CD8-positive, alpha-beta T cell (primary cell): ENCODE measurements at regions of chr1 and their contacts with region 1.

Region 1: DNA sequence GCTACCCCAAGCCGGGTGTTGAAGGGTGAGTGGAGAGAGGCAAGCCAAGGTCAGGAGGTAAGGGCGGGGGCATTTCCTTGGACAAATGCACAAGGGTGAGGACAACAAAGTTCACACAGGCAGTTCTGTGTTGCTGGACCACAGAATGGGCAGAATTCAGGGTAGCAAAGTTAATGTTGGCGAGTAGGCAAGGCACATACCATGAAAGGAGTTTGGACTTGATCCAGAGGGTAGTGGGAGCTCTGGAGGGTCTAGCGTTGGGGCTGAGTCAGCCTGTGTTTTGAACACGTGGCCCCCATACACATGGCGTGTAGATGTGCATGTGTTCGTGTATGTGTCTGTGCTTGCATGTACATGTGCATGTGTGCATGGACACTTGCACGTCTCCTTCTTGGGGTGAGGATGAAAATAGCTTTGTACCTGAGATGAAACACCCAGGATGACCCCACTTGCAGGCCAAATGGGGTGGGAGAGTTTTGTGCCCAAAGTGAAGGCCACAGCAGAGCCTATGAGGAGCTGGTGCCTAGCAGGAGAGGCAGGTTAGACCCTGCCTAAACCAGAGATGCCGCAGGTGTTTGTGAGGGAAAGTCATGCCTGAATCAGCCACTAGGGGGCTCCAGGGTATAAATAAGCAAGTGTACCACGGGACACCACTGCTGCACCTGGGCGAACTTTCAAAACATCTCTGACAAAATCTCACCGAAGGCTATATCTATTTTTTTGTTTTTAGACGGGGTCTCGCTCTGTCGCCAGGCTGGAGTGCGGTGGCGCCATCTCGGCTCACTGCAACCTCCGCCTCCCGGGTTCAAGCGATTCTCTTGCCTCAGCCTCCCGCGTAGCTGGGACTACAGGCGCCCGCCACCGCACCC is 21.8 kb downstream of the SLC27A3 start:
- DNase-seq: peak; percentile 73 to 90 (median 86)
- ATAC-seq: peak; percentile 98
- H3K4me3 ChIP-seq: no peak overlapping the region
- H3K4me3 Mint-ChIP-seq: no peak overlapping the region
- H3K27ac ChIP-seq: no peak overlapping the region
- H3K27ac Mint-ChIP-seq: peak overlapping the region; percentile 53
- H3K4me1 ChIP-seq: peaks cover 24% of the 10 kb centered on the region
- H3K4me1 Mint-ChIP-seq: peaks cover 19% of the 10 kb centered on the region
- H3K27me3 ChIP-seq: no peaks in the 10 kb centered on the region
- H3K27me3 Mint-ChIP-seq: no peaks in the 10 kb centered on the region
- CTCF ChIP-seq: peak; percentile 90

Region 2: GRCh38 chr1:153649863-153650235 is 147.2 kb before region 1 on chr1:
- CTCF ChIA-PET with region 1: no interaction called
- POLR2A ChIA-PET with region 1: no interaction called
- intact Hi-C with region 1: no loop called
- DNase-seq: peak in 1 of 9 experiments; percentile 38
- ATAC-seq: peak; percentile 15
- H3K4me3 ChIP-seq: peak overlapping the region in 1 of 2 experiments; percentile 18
- H3K4me3 Mint-ChIP-seq: peak overlapping the region; percentile 77
- H3K27ac ChIP-seq: peak overlapping the region; percentile 24 to 54
- H3K27ac Mint-ChIP-seq: peak overlapping the region; percentile 94
- H3K4me1 ChIP-seq: peaks cover 49% of the 10 kb centered on the region
- H3K4me1 Mint-ChIP-seq: peaks cover 46% of the 10 kb centered on the region
- H3K27me3 ChIP-seq: no peaks in the 10 kb centered on the region
- H3K27me3 Mint-ChIP-seq: no peaks in the 10 kb centered on the region
- CTCF ChIP-seq: no peak

Region 3: GRCh38 chr1:153816283-153816889 is 19.4 kb after region 1 on chr1:
- CTCF ChIA-PET with region 1: interaction called, 16 read pairs
- POLR2A ChIA-PET with region 1: no interaction called
- intact Hi-C with region 1: no loop called
- DNase-seq: no peak
- ATAC-seq: no peak
- H3K4me3 ChIP-seq: no peak overlapping the region
- H3K4me3 Mint-ChIP-seq: no peak overlapping the region
- H3K27ac ChIP-seq: no peak overlapping the region
- H3K27ac Mint-ChIP-seq: no peak overlapping the region
- H3K4me1 ChIP-seq: no peaks in the 10 kb centered on the region
- H3K4me1 Mint-ChIP-seq: no peaks in the 10 kb centered on the region
- H3K27me3 ChIP-seq: no peaks in the 10 kb centered on the region
- H3K27me3 Mint-ChIP-seq: no peaks in the 10 kb centered on the region
- CTCF ChIP-seq: no peak

Region 4: GRCh38 chr1:153866045-153866850 is 69.2 kb after region 1 on chr1:
- CTCF ChIA-PET with region 1: no interaction called
- POLR2A ChIA-PET with region 1: no interaction called
- intact Hi-C with region 1: no loop called
- DNase-seq: no peak
- ATAC-seq: no peak
- H3K4me3 ChIP-seq: no peak overlapping the region
- H3K4me3 Mint-ChIP-seq: no peak overlapping the region
- H3K27ac ChIP-seq: peak overlapping the region in 1 of 2 experiments; percentile 19
- H3K27ac Mint-ChIP-seq: peak overlapping the region; percentile 42
- H3K4me1 ChIP-seq: peaks cover 12% of the 10 kb centered on the region
- H3K4me1 Mint-ChIP-seq: peaks cover 46% of the 10 kb centered on the region
- H3K27me3 ChIP-seq: no peaks in the 10 kb centered on the region
- H3K27me3 Mint-ChIP-seq: no peaks in the 10 kb centered on the region
- CTCF ChIP-seq: no peak

Region 5: DNA sequence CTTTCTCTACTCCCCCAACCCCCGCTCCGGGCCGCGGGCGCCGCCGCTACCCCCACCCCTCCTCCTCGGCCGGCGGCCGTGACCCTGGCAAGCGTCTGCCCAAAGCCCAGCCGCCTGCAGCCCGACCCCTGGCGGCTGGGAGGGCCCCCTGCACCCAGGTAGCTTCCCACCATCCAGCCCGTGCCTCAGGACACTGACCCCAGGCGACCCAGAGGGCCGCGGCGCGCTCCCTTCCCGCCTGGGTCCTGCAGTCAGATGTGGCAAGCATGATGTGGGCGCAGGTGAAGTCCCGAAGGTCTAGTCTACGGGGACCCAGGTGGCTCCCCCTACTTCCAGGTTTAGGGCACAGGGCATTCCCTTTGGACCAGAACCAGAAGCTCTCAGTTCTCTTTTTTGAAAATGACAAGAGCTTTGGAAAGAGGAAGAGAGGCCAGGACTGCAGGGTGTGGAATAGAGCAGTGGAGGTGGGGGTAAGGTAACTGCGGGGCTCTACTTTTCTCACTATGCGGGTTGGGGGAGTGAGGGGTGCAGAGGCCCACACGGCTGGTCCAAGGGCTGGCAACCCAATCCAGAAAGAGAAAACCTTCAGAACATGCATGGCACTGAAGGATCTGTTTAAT is 149.7 kb after region 1 on chr1 and contains the start of gene DENND4B:
- CTCF ChIA-PET with region 1: interaction called, 14 read pairs
- POLR2A ChIA-PET with region 1: interaction called, 5 read pairs
- intact Hi-C with region 1: loop called (anchors 1 kb)
- DNase-seq: peak; percentile 43 to 87 (median 75)
- ATAC-seq: peak; percentile 61
- H3K4me3 ChIP-seq: peak within 1 kb of the TSS; percentile 71 to 84
- H3K4me3 Mint-ChIP-seq: peak within 1 kb of the TSS; percentile 94
- H3K27ac ChIP-seq: peak within 1 kb of the TSS; percentile 81 to 95
- H3K27ac Mint-ChIP-seq: peak within 1 kb of the TSS; percentile 86
- H3K4me1 ChIP-seq: peaks cover 33% of the 10 kb centered on the region
- H3K4me1 Mint-ChIP-seq: peaks cover 25% of the 10 kb centered on the region
- H3K27me3 ChIP-seq: no peaks in the 10 kb centered on the region
- H3K27me3 Mint-ChIP-seq: no peaks in the 10 kb centered on the region
- CTCF ChIP-seq: peak; percentile 95
- total RNA-seq, gene DENND4B: 87.2 to 91.3 TPM

Region 6: GRCh38 chr1:153967082-153968000 is 170.3 kb after region 1 on chr1 and contains the start of gene CREB3L4:
- CTCF ChIA-PET with region 1: interaction called, 18 read pairs
- POLR2A ChIA-PET with region 1: no interaction called
- intact Hi-C with region 1: no loop called
- DNase-seq: peak; percentile 62 to 97 (median 81)
- ATAC-seq: peak; percentile 84
- H3K4me3 ChIP-seq: peak within 1 kb of the TSS; percentile 77 to 79
- H3K4me3 Mint-ChIP-seq: peak within 1 kb of the TSS; percentile 86
- H3K27ac ChIP-seq: peak within 1 kb of the TSS; percentile 66 to 78
- H3K27ac Mint-ChIP-seq: peak within 1 kb of the TSS; percentile 95
- H3K4me1 ChIP-seq: peaks cover 41% of the 10 kb centered on the region
- H3K4me1 Mint-ChIP-seq: peaks cover 51% of the 10 kb centered on the region
- H3K27me3 ChIP-seq: no peaks in the 10 kb centered on the region
- H3K27me3 Mint-ChIP-seq: no peaks in the 10 kb centered on the region
- CTCF ChIP-seq: peak; percentile 15
- total RNA-seq, gene CREB3L4: 3.0 to 3.7 TPM

Region 7: DNA sequence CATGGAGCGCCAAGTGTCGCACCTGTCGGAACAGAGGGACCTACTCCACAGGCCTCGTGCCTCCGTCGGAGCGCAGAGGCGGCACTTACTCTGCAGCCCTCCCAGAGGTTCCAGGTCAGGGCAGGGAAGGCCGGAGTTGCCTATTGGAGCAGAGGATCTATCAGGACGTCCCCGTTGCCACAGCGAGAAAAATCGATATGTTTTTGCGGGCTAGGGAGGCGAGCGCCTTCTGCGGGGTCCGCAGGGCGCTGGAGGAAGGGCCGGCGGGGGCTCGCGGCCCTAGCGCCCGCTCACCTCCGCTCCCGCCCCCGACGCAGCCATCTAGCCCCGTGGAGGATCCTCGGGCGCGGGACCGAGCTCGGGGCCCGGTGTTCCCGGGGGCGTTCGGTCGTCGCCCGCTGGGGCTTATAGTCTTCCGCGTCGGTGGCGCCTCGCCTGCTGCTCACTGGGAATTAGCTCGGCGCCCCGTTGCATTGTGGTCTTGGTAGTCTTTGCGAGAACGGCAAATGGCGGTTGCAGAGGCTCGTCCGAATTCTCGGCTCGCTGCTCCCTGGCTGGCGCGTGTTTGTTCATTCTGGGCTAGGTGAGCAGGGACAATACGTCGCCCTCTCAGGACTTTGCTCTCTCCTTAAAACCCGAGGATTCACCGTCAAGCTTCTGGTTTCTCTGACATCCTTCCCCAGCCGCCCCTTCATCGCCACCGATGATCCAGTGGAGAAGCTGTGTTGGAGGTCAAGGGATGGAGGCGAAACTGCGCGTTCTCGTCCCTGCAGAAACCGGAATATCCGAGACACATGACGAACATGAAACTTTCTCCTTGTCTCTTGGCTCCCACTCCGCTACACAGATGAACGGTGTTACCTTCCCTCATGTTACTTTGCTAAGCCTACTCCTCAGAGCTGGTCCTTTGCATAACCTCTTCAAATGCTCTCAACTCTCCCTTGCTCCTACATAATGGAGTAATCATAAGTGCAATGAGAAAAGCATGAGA is 180.5 kb after region 1 on chr1 and contains the start of gene JTB:
- CTCF ChIA-PET with region 1: interaction called, 12 read pairs
- POLR2A ChIA-PET with region 1: interaction called, 6 read pairs
- intact Hi-C with region 1: no loop called
- DNase-seq: peak; percentile 62 to 91 (median 86)
- ATAC-seq: peak; percentile 95
- H3K4me3 ChIP-seq: peak within 1 kb of the TSS; percentile 92 to 97
- H3K4me3 Mint-ChIP-seq: peak within 1 kb of the TSS; percentile 97
- H3K27ac ChIP-seq: peak within 1 kb of the TSS; percentile 74 to 77
- H3K27ac Mint-ChIP-seq: peak within 1 kb of the TSS; percentile 96
- H3K4me1 ChIP-seq: peaks cover 20% of the 10 kb centered on the region
- H3K4me1 Mint-ChIP-seq: peaks cover 35% of the 10 kb centered on the region
- H3K27me3 ChIP-seq: no peaks in the 10 kb centered on the region
- H3K27me3 Mint-ChIP-seq: no peaks in the 10 kb centered on the region
- CTCF ChIP-seq: no peak
- total RNA-seq, gene JTB: 90.4 to 91.1 TPM

Region 8: GRCh38 chr1:154272217-154272998 is 475.4 kb after region 1 on chr1 and contains the start of gene HAX1:
- CTCF ChIA-PET with region 1: no interaction called
- POLR2A ChIA-PET with region 1: no interaction called
- intact Hi-C with region 1: loop called (anchors 2 to 5 kb)
- DNase-seq: peak; percentile 91 to 100 (median 94)
- ATAC-seq: peak; percentile 85
- H3K4me3 ChIP-seq: peak within 1 kb of the TSS; percentile 85 to 91
- H3K4me3 Mint-ChIP-seq: peak within 1 kb of the TSS; percentile 94
- H3K27ac ChIP-seq: peak within 1 kb of the TSS; percentile 88 to 92
- H3K27ac Mint-ChIP-seq: peak within 1 kb of the TSS; percentile 98
- H3K4me1 ChIP-seq: peaks cover 22% of the 10 kb centered on the region
- H3K4me1 Mint-ChIP-seq: peaks cover 38% of the 10 kb centered on the region
- H3K27me3 ChIP-seq: no peaks in the 10 kb centered on the region
- H3K27me3 Mint-ChIP-seq: no peaks in the 10 kb centered on the region
- CTCF ChIP-seq: peak; percentile 75
- total RNA-seq, gene HAX1: 56.8 to 58.4 TPM